CD8-positive, alpha-beta T cell (primary cell): ENCODE measurements at regions of chr5 and their contacts with region 1.

Region 1: GRCh38 chr5:151659001-151659754 is 27.5 kb downstream of the SPARC start:
- DNase-seq: peak; percentile 56 to 85 (median 78)
- ATAC-seq: peak; percentile 97
- H3K4me3 ChIP-seq: no peak overlapping the region
- H3K4me3 Mint-ChIP-seq: no peak overlapping the region
- H3K27ac ChIP-seq: no peak overlapping the region
- H3K27ac Mint-ChIP-seq: no peak overlapping the region
- H3K4me1 ChIP-seq: no peaks in the 10 kb centered on the region
- H3K4me1 Mint-ChIP-seq: peaks cover 6% of the 10 kb centered on the region
- H3K27me3 ChIP-seq: no peaks in the 10 kb centered on the region
- H3K27me3 Mint-ChIP-seq: no peaks in the 10 kb centered on the region
- CTCF ChIP-seq: peak; percentile 90

Region 2: GRCh38 chr5:150809363-150809762 is 849.8 kb before region 1 on chr5:
- CTCF ChIA-PET with region 1: no interaction called
- POLR2A ChIA-PET with region 1: no interaction called
- intact Hi-C with region 1: no loop called
- DNase-seq: no peak
- ATAC-seq: no peak
- H3K4me3 ChIP-seq: no peak overlapping the region
- H3K4me3 Mint-ChIP-seq: no peak overlapping the region
- H3K27ac ChIP-seq: no peak overlapping the region
- H3K27ac Mint-ChIP-seq: no peak overlapping the region
- H3K4me1 ChIP-seq: no peaks in the 10 kb centered on the region
- H3K4me1 Mint-ChIP-seq: no peaks in the 10 kb centered on the region
- H3K27me3 ChIP-seq: no peaks in the 10 kb centered on the region
- H3K27me3 Mint-ChIP-seq: peaks cover 10% of the 10 kb centered on the region
- CTCF ChIP-seq: no peak

Region 3: DNA sequence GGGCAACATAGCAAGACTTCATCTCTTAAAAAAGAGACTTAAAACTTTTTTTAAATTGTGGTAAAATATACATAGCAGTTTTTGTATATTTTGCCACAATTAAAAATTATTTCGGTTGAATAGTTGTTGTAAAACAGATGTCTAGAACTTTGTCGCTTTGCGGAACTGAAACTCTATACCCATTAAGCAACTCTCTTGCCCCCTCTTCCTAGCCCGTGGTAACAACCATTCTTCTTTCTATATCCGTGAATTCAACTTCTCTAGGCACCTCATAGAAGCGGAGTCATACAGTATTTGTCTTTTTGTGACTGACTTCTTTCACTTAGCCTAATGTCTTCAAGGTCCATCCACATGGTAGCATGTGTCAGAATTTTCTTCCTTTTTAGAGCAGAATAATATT is 15.8 kb before region 1 on chr5:
- CTCF ChIA-PET with region 1: interaction called, 17 read pairs
- POLR2A ChIA-PET with region 1: no interaction called
- intact Hi-C with region 1: no loop called
- DNase-seq: no peak
- ATAC-seq: no peak
- H3K4me3 ChIP-seq: no peak overlapping the region
- H3K4me3 Mint-ChIP-seq: no peak overlapping the region
- H3K27ac ChIP-seq: no peak overlapping the region
- H3K27ac Mint-ChIP-seq: no peak overlapping the region
- H3K4me1 ChIP-seq: peaks cover 9% of the 10 kb centered on the region
- H3K4me1 Mint-ChIP-seq: peaks cover 6% of the 10 kb centered on the region
- H3K27me3 ChIP-seq: no peaks in the 10 kb centered on the region
- H3K27me3 Mint-ChIP-seq: peaks cover 3% of the 10 kb centered on the region
- CTCF ChIP-seq: no peak

Region 4: DNA sequence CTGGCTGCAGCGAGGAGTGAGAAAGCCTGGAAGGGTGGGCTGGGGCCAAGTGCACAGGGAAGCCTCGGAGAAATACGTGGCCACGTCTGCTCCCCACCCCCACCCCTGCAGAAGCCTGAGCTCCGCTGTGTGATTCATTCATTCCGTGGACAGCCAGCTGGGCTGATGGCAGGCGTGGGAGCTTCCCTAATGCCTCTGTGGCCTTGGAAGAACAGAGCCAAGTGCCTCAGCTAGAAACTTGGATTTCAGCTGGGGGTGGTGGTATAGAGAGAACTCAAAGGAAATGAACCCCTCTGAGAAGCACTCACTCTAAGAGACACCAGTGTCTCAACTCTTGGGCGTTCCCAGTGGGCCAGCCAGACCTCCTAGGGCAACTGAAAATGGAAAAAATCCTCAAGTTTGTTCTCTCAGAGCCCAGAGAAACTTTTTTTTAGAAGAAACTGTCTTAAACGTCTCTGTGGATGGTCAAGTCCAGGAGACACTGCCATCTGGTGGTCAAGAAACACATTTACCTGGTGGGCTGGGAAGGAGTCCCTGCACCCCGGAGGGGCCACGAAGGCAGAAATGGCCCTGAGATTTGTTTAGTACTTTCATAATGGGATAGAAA is 81.3 kb after region 1 on chr5:
- CTCF ChIA-PET with region 1: interaction called, 22 read pairs
- POLR2A ChIA-PET with region 1: no interaction called
- intact Hi-C with region 1: loop called (anchors 1 kb)
- DNase-seq: peak; percentile 10 to 74 (median 38)
- ATAC-seq: peak; percentile 71
- H3K4me3 ChIP-seq: no peak overlapping the region
- H3K4me3 Mint-ChIP-seq: no peak overlapping the region
- H3K27ac ChIP-seq: no peak overlapping the region
- H3K27ac Mint-ChIP-seq: no peak overlapping the region
- H3K4me1 ChIP-seq: peaks cover 14% of the 10 kb centered on the region
- H3K4me1 Mint-ChIP-seq: peaks cover 18% of the 10 kb centered on the region
- H3K27me3 ChIP-seq: no peaks in the 10 kb centered on the region
- H3K27me3 Mint-ChIP-seq: no peaks in the 10 kb centered on the region
- CTCF ChIP-seq: peak; percentile 79

Region 5: GRCh38 chr5:152142840-152143469 is 483.8 kb after region 1 on chr5:
- CTCF ChIA-PET with region 1: interaction called, 13 read pairs
- POLR2A ChIA-PET with region 1: no interaction called
- intact Hi-C with region 1: loop called in 1 of 2 experiments (anchors 1 kb)
- DNase-seq: peak; percentile 41 to 77 (median 60)
- ATAC-seq: peak; percentile 69
- H3K4me3 ChIP-seq: no peak overlapping the region
- H3K4me3 Mint-ChIP-seq: no peak overlapping the region
- H3K27ac ChIP-seq: no peak overlapping the region
- H3K27ac Mint-ChIP-seq: no peak overlapping the region
- H3K4me1 ChIP-seq: no peaks in the 10 kb centered on the region
- H3K4me1 Mint-ChIP-seq: no peaks in the 10 kb centered on the region
- H3K27me3 ChIP-seq: no peaks in the 10 kb centered on the region
- H3K27me3 Mint-ChIP-seq: no peaks in the 10 kb centered on the region
- CTCF ChIP-seq: peak; percentile 93

Region 6: DNA sequence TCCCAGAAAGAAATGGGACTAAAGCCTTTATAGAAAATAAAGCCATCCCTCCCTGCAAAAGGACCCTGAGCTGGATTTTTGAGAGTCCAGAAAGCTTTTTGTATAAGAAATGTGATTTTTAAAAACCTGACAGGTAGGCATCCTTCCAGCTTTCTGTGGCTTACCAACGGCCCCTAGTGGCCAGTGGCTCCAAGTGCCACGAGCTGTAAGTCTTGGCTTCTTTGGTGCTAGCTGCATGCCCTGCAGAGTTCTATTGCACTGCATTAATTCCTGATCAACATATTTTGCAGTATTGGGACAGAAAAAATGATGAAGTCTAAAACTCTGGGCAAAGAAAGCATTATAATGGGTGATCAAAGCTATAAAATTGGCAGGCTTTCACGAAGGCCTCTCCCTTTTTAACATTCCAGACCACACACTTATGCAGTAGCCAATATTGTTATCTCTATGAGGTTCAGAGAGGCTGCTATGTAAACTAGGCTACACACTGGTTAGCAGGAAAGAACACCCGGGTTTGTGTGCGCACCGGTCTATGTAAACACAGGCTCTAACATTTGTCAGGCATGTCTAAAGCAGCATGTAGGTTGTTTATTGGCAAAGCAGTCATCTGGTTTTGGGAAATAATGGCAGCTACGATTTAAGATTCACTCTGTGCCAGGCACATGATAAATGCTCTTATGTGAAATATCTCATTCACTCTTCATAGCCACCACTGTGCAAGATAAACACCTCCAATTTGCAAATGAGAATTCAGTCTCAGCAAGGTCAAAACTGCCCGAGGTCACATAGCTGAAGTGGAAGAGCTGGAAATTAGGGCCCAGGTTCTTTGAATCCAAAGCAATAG is 690.7 kb after region 1 on chr5:
- CTCF ChIA-PET with region 1: interaction called, 3 read pairs
- POLR2A ChIA-PET with region 1: no interaction called
- intact Hi-C with region 1: loop called in 1 of 2 experiments (anchors 5 kb)
- DNase-seq: peak in 2 of 9 experiments; percentile 23
- ATAC-seq: no peak
- H3K4me3 ChIP-seq: no peak overlapping the region
- H3K4me3 Mint-ChIP-seq: no peak overlapping the region
- H3K27ac ChIP-seq: no peak overlapping the region
- H3K27ac Mint-ChIP-seq: no peak overlapping the region
- H3K4me1 ChIP-seq: no peaks in the 10 kb centered on the region
- H3K4me1 Mint-ChIP-seq: no peaks in the 10 kb centered on the region
- H3K27me3 ChIP-seq: no peaks in the 10 kb centered on the region
- H3K27me3 Mint-ChIP-seq: peaks cover 4% of the 10 kb centered on the region
- CTCF ChIP-seq: peak; percentile 35

Region 7: GRCh38 chr5:152505442-152506042 is 846.4 kb after region 1 on chr5:
- CTCF ChIA-PET with region 1: interaction called, 3 read pairs
- POLR2A ChIA-PET with region 1: no interaction called
- intact Hi-C with region 1: loop called (anchors 2 to 5 kb)
- DNase-seq: peak in 5 of 9 experiments; percentile 5 to 61 (median 30)
- ATAC-seq: no peak
- H3K4me3 ChIP-seq: no peak overlapping the region
- H3K4me3 Mint-ChIP-seq: no peak overlapping the region
- H3K27ac ChIP-seq: no peak overlapping the region
- H3K27ac Mint-ChIP-seq: no peak overlapping the region
- H3K4me1 ChIP-seq: no peaks in the 10 kb centered on the region
- H3K4me1 Mint-ChIP-seq: no peaks in the 10 kb centered on the region
- H3K27me3 ChIP-seq: no peaks in the 10 kb centered on the region
- H3K27me3 Mint-ChIP-seq: peaks cover 21% of the 10 kb centered on the region
- CTCF ChIP-seq: no peak